ENCODE measurements at regions of chr22 and their contacts with region 1.

Region 1: DNA sequence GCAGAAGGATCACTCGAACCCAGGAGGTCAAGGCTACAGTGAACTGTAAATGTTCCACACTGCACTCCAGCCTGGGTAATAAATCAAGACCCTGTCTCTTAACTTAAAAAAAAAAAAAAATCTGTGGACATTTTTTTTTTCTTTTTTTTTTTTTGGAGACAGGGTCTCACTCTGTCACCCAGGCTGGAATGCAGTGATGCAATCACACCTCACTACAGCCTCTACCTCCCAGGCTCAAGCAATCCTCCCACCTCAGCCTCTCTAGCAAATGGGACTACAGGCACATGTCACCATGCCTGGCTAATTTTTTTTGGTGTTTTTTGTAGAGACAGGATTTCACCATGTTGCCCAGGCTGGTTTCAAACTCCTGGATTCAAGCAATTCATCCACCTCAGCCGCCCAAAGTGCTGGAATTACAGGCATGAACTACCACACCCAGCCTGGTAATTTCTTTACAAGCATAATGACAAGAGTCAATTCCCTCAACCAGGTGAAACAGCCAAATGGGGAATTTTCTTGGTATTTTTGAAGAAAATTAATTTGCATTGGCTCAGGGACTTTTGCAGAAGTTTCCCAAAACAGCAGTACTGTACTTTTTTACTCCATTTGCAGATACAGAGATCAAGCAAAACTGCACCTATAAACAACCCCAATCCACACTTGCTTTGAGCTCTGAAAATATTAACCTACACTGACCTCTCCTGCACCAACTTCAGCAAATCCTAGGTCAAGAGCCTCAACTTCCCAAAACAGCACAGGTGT is 44.0 kb downstream of the MRTFA start:
- DNase-seq: no peak
- H3K4me3 ChIP-seq: no peak overlapping the region
- H3K27ac ChIP-seq: no peak overlapping the region
- H3K4me1 ChIP-seq: peaks cover 1% of the 10 kb centered on the region
- H3K27me3 ChIP-seq: no peaks in the 10 kb centered on the region
- CTCF ChIP-seq: no peak
- EP300 ChIP-seq: no peak
- POLR2A ChIP-seq: no peak

Region 2: GRCh38 chr22:40560551-40560950 is 32.0 kb before region 1 on chr22:
- intact Hi-C with region 1: loop called in 1 of 4 experiments (anchors 1 kb)
- DNase-seq: no peak
- H3K4me3 ChIP-seq: no peak overlapping the region
- H3K27ac ChIP-seq: no peak overlapping the region
- H3K4me1 ChIP-seq: peaks cover 1% of the 10 kb centered on the region
- H3K27me3 ChIP-seq: no peaks in the 10 kb centered on the region
- CTCF ChIP-seq: no peak
- EP300 ChIP-seq: no peak
- POLR2A ChIP-seq: no peak

Region 3: GRCh38 chr22:40651563-40652501 is 59.3 kb after region 1 on chr22:
- intact Hi-C with region 1: no loop called
- DNase-seq: peak; percentile 96 to 98 (median 96)
- H3K4me3 ChIP-seq: peak overlapping the region; percentile 64
- H3K27ac ChIP-seq: peak overlapping the region; percentile 97
- H3K4me1 ChIP-seq: peaks cover 6% of the 10 kb centered on the region
- H3K27me3 ChIP-seq: no peaks in the 10 kb centered on the region
- CTCF ChIP-seq: peak in 1 of 3 donors; percentile 43
- EP300 ChIP-seq: peak; percentile 62
- POLR2A ChIP-seq: peak; percentile 89